Head of caudate nucleus (tissue), 42 donors: ENCODE measurements at regions of chr15 and their contacts with region 1.

Region 1: GRCh38 chr15:60444289-60444912 is 34.5 kb downstream of the ICE2 start:
- DNase-seq: no peak

Region 2: GRCh38 chr15:60362321-60363086 is 81.9 kb before region 1 on chr15:
- intact Hi-C with region 1: loop called (anchors 10 kb)
- DNase-seq: no peak

Region 3: DNA sequence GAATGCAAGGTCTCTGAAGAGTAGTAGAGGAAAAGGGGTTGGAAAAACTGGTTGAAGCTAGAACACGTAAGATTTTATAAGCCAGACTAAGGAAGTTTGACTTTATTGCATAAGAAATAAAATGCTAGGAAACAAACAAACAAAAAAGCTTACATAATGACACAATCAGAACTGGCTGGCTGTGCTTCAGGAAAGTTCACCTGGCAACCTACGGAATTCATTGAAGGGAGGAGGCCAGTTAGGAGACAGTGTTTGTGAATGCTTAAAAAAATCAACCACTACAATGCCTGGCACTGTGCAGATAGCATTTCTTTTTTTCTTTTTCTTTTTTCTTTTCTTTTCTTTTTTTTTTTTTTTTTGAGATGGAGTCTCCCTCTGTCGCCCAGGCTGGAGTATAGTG is 36.5 kb after region 1 on chr15:
- intact Hi-C with region 1: no loop called
- DNase-seq: no peak